MCF 10A (cell line): ENCODE measurements at regions of chr4 and their contacts with region 1.

Region 1: GRCh38 chr4:7067452-7068278 is at the start of gene GRPEL1:
- DNase-seq: peak; percentile 100
- H3K4me3 Mint-ChIP-seq: peak within 1 kb of the TSS; percentile 90
- H3K27ac Mint-ChIP-seq: peak within 1 kb of the TSS; percentile 59
- H3K4me1 Mint-ChIP-seq: peaks cover 23% of the 10 kb centered on the region
- H3K27me3 Mint-ChIP-seq: peaks cover 14% of the 10 kb centered on the region
- CTCF ChIP-seq: no peak
- total RNA-seq, gene GRPEL1: 73.0 and 82.9 TPM in 2 replicates

Region 2: DNA sequence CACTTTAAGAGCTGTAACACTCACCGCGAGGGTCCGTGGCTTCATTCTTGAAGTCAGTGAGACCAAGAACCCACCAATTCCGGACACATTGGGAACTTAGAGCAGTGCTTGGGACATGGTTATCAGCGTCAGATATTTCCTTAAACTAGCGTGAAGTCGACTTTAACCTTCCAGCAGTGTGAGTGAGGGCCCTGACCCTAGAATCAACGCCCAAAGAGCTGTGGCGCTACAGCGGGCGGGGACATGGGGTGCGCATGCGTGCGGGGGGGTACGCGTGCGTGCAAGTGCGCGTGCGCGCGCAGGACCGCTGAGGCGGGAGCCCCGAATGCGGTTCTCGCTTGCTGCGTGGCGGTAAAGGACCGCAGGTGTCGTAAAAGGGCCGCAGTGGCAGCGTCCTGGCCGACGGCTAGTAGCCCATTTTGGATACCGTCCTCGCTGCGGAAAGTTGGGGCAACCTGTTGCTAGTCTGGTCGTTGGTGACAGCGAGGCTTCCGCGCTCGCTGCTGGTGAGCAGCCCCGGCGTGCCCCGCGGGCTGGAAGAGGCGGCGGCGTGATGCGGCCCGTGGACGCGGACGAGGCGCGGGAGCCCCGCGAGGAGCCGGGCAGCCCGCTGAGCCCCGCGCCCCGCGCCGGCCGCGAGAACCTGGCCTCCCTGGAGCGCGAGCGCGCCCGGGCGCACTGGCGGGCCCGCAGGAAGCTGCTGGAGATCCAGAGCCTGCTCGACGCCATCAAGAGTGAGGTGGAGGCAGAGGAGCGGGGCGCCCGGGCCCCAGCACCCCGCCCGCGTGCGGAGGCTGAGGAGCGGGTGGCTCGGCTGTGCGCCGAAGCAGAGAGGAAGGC is 393.8 kb before region 1 on chr4:
- CTCF ChIA-PET with region 1: interaction called, 8 read pairs
- POLR2A ChIA-PET with region 1: interaction called, 10 read pairs
- intact Hi-C with region 1: no loop called
- DNase-seq: peak; percentile 93
- H3K4me3 Mint-ChIP-seq: peak overlapping the region; percentile 88
- H3K27ac Mint-ChIP-seq: peak overlapping the region; percentile 71
- H3K4me1 Mint-ChIP-seq: peaks cover 22% of the 10 kb centered on the region
- H3K27me3 Mint-ChIP-seq: no peaks in the 10 kb centered on the region
- CTCF ChIP-seq: no peak

Region 3: GRCh38 chr4:6885951-6886557 is 181.6 kb before region 1 on chr4:
- CTCF ChIA-PET with region 1: interaction called, 11 read pairs
- POLR2A ChIA-PET with region 1: no interaction called
- intact Hi-C with region 1: loop called (anchors 5 kb)
- DNase-seq: peak; percentile 58
- H3K4me3 Mint-ChIP-seq: no peak overlapping the region
- H3K27ac Mint-ChIP-seq: no peak overlapping the region
- H3K4me1 Mint-ChIP-seq: peaks cover 6% of the 10 kb centered on the region
- H3K27me3 Mint-ChIP-seq: no peaks in the 10 kb centered on the region
- CTCF ChIP-seq: no peak

Region 4: DNA sequence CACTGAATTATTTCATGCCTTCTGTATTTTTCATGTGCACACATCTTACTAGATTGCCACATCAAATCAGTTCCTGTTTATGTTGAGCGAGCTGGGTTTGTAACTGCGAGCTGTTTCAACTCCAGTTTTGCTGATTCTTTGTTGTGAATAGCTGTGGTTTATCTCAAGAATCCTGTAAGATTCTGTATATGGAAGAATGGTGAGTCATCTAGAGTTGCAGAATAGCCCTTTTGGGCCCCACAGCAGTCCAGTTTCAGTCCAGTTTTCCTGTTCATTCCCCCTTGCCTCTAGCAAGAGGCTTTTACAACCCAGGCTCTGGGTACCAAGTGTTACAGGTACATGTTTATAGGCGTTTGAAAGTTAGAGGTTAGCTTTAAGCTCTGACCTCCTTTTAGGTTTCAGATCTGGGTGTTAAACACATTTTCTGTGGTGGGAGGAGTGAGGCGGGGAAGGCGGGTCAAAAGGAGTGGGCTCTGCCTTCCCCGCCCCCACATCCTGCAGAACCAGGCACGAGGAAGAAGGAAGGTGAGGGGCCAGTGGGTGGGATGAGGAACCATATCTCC is 125.3 kb before region 1 on chr4:
- CTCF ChIA-PET with region 1: interaction called, 13 read pairs
- POLR2A ChIA-PET with region 1: interaction called, 6 read pairs
- intact Hi-C with region 1: no loop called
- DNase-seq: peak; percentile 86
- H3K4me3 Mint-ChIP-seq: peak overlapping the region; percentile 49
- H3K27ac Mint-ChIP-seq: peak overlapping the region; percentile 95
- H3K4me1 Mint-ChIP-seq: peaks cover 32% of the 10 kb centered on the region
- H3K27me3 Mint-ChIP-seq: no peaks in the 10 kb centered on the region
- CTCF ChIP-seq: no peak

Region 5: DNA sequence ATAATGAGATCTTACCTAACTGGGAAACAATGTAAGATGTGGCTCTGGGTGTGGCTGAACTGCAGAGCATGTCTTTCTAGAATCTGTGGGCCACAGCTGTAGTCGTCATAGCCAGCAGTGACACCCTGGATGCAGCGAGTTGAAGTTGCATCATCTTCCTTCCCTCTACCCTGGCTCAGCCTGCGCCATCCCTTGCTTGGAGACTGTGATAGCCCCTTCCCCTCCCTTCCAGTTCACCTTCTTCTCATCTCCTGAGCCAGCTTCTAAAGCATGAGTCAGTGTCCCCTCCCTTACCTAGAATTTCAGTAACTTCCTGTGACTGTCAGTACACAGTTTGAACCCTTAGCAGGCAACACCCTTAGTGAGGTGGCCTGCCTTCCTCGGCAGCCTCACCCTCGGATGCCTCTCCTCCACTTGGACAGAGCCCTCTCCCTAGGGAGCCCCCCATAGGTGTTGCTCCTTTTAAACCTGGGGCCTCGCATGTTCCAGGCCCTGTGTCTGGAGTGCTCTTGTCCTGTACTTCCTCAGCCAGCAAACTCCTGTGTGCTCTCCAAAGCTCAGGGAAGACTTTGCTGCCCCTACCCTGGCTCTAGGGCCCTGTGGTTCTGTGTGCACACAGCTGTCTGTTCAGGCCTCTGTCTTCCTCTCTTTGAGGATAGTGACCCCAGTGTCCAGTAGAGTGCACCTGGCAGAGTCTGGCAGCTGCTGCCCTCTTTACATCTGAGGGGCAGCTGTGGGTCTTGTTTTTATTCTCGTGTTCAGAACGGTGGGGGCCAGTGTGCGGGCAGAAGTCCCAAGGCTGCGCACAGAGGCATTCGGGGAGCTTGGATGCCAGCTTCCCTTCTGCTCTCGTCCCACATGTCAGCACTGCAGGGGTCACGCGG is 68.3 kb before region 1 on chr4:
- CTCF ChIA-PET with region 1: interaction called, 9 read pairs
- POLR2A ChIA-PET with region 1: interaction called, 49 read pairs
- intact Hi-C with region 1: no loop called
- DNase-seq: peak; percentile 88
- H3K4me3 Mint-ChIP-seq: peak overlapping the region; percentile 29
- H3K27ac Mint-ChIP-seq: peak overlapping the region; percentile 80
- H3K4me1 Mint-ChIP-seq: peaks cover 29% of the 10 kb centered on the region
- H3K27me3 Mint-ChIP-seq: no peaks in the 10 kb centered on the region
- CTCF ChIP-seq: no peak

Region 6: GRCh38 chr4:7050481-7051143 is 17.1 kb before region 1 on chr4:
- CTCF ChIA-PET with region 1: interaction called, 98 read pairs
- POLR2A ChIA-PET with region 1: interaction called, 165 read pairs
- intact Hi-C with region 1: loop called (anchors 1 kb)
- DNase-seq: no peak
- H3K4me3 Mint-ChIP-seq: no peak overlapping the region
- H3K27ac Mint-ChIP-seq: no peak overlapping the region
- H3K4me1 Mint-ChIP-seq: peaks cover 21% of the 10 kb centered on the region
- H3K27me3 Mint-ChIP-seq: no peaks in the 10 kb centered on the region
- CTCF ChIP-seq: no peak

Region 7: GRCh38 chr4:7101692-7102515 is 34.2 kb after region 1 on chr4:
- CTCF ChIA-PET with region 1: interaction called, 13 read pairs
- POLR2A ChIA-PET with region 1: interaction called, 5 read pairs
- intact Hi-C with region 1: no loop called
- DNase-seq: peak; percentile 64
- H3K4me3 Mint-ChIP-seq: peak overlapping the region; percentile 72
- H3K27ac Mint-ChIP-seq: no peak overlapping the region
- H3K4me1 Mint-ChIP-seq: peaks cover 6% of the 10 kb centered on the region
- H3K27me3 Mint-ChIP-seq: peaks cover 19% of the 10 kb centered on the region
- CTCF ChIP-seq: peak; percentile 57